H1 (cell line): ENCODE measurements at regions of chr3 and their contacts with region 1.

Region 1: DNA sequence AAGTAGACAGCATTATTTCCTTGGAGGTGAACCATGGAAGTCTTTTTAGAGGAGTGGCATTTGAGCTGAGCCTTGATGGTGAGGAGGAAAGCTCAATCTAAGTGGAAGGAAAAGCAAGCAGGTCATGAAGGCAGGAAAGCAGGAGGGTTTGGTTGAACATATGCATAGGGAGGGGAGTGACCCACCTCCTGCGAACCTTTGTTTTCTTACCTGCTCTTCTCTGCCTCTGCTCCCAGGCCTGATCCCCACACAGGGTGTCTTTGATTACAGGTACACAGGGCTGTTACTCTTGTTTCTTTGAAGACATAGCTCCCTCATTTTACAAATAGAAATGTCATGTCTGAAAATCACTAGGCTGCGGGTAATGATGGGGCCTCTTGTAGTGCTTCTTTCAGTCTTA is 248.1 kb upstream of the TPRG1 start:
- DNase-seq: no peak
- H3K4me3 ChIP-seq: no peak overlapping the region
- H3K27ac ChIP-seq: no peak overlapping the region
- H3K4me1 ChIP-seq: no peaks in the 10 kb centered on the region
- H3K27me3 ChIP-seq: no peaks in the 10 kb centered on the region
- CTCF ChIP-seq: no peak
- EP300 ChIP-seq: no peak
- POLR2A ChIP-seq: no peak
- RAD21 ChIP-seq: no peak

Region 2: DNA sequence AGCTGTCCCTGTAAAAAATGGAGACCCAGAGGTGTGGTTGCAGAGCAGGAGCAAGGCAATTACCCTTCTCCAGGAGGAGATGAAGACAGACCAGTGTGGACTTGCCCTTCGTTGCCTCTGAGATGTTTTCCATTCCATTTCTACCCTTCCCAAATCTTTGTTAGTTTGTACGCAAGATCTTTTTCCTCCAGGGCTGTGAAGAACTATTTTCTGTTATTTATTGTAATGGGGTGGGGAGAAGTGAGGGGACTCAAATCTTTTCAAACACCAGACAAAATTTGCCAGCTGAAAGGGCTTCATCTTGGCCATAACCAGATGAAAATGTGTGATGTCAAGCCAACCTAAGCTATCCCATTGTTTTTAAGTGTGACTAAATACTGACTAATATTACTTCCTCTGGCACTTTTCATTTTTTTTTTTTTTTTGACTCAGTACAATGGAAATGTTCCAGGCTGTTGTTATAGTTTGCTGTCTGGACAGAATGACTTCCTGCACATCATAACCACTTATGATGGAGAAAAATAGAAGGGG is 23.2 kb before region 1 on chr3:
- CTCF ChIA-PET with region 1: no interaction called
- POLR2A ChIA-PET with region 1: no interaction called
- DNase-seq: no peak
- H3K4me3 ChIP-seq: no peak overlapping the region
- H3K27ac ChIP-seq: no peak overlapping the region
- H3K4me1 ChIP-seq: no peaks in the 10 kb centered on the region
- H3K27me3 ChIP-seq: no peaks in the 10 kb centered on the region
- CTCF ChIP-seq: no peak
- EP300 ChIP-seq: no peak
- POLR2A ChIP-seq: no peak
- RAD21 ChIP-seq: no peak

Region 3: GRCh38 chr3:188937389-188937788 is 13.7 kb after region 1 on chr3:
- CTCF ChIA-PET with region 1: interaction called, 14 read pairs
- POLR2A ChIA-PET with region 1: no interaction called
- DNase-seq: no peak
- H3K4me3 ChIP-seq: no peak overlapping the region; a peak in 1 of 8 replicates
- H3K27ac ChIP-seq: no peak overlapping the region
- H3K4me1 ChIP-seq: peaks cover 0 to 4% (median 0%) of the 10 kb centered on the region in 4 experiments; a peak in 3 of 7 replicates
- H3K27me3 ChIP-seq: no peaks in the 10 kb centered on the region
- CTCF ChIP-seq: no peak
- EP300 ChIP-seq: no peak
- POLR2A ChIP-seq: no peak
- RAD21 ChIP-seq: no peak